ENCODE measurements at regions of chr12 and their contacts with region 1.

Region 1: GRCh38 chr12:13211859-13212664 is 15.5 kb downstream of the EMP1 start:
- DNase-seq: peak; percentile 74 to 91 (median 84)
- H3K4me3 ChIP-seq: no peak overlapping the region
- H3K27ac ChIP-seq: no peak overlapping the region
- H3K4me1 ChIP-seq: peaks cover 0 to 47% (median 39%) of the 10 kb centered on the region in 4 experiments
- H3K27me3 ChIP-seq: no peaks in the 10 kb centered on the region

Region 2: DNA sequence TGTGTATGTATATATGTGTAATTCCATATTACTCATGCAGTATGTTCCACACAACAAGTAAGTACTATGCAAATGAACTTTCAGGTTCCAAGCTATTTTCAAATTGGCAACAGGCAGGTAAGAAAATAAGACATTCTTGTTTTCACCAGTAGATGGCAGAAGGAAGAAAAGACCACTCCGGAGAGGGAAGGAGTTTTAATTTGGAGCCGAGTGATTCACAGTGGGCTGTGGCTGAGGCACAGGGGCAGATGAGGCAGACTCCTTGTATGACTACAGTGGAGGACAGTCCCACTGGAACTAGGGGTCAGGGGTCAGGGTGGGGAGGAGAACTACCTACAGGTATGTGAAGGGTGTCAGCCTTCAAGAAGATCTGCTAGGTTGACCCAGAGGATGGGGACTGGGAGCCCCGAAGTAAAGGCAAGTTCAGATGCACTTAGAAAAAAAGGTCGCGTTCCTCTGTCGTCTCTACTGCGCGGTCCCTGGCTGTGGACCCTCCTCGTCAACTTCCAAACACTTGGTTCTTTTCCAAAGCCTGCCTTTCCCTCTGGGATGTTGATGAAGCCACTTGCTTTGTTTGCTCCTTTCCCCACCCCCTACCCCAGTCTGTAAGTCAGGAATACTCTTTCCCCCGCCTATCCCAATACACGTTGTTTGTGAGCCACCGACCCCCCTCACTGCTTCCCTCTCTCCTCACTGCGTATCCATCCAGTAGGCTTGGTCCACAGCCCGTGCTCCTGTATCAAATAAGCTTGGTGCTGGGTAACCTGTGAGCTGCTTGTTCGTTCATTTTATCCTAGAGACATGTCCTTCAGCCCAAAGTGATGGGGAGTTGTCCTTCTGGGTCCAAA is 374.8 kb before region 1 on chr12:
- CTCF ChIA-PET with region 1: interaction called, 36 read pairs
- POLR2A ChIA-PET with region 1: no interaction called
- DNase-seq: peak; percentile 56 to 78 (median 70)
- H3K4me3 ChIP-seq: no peak overlapping the region
- H3K27ac ChIP-seq: no peak overlapping the region
- H3K4me1 ChIP-seq: peaks cover 0 to 5% (median 1%) of the 10 kb centered on the region in 4 experiments
- H3K27me3 ChIP-seq: no peaks in the 10 kb centered on the region

Region 3: DNA sequence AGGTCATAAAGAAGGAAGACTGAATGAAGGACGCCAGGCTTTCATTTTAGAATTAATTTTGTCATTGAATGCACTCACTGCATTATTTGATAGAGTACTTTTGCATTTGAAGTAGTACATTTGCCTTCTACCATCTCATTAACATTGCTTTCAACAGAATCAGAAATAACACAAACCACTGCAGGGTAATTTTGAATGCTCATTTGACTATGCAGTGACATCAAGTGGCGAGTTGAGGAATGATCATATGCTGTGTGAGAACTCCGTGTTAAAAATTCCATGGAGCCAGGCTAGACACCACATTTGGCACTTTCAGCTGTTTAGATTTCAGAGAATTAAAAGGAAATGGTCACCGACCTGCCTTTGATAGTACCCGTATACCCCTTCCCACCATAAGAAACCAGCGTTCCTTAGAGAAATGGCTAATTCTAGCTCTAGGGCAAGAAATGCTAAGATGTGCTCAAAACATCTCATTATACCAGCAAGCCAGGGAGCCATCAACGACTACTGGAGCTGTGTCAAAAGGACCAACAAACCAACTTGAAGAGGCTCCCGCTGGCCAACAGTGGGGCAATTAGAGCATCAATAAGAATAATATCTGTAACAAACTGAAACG is 228.5 kb before region 1 on chr12:
- CTCF ChIA-PET with region 1: interaction called, 123 read pairs
- POLR2A ChIA-PET with region 1: no interaction called
- DNase-seq: peak; percentile 31 to 58 (median 57)
- H3K4me3 ChIP-seq: no peak overlapping the region
- H3K27ac ChIP-seq: no peak overlapping the region
- H3K4me1 ChIP-seq: no peaks in the 10 kb centered on the region
- H3K27me3 ChIP-seq: no peaks in the 10 kb centered on the region

Region 4: GRCh38 chr12:13066459-13066858 is 145.6 kb before region 1 on chr12:
- CTCF ChIA-PET with region 1: interaction called, 15 read pairs
- POLR2A ChIA-PET with region 1: no interaction called
- DNase-seq: no peak
- H3K4me3 ChIP-seq: no peak overlapping the region
- H3K27ac ChIP-seq: no peak overlapping the region
- H3K4me1 ChIP-seq: no peaks in the 10 kb centered on the region
- H3K27me3 ChIP-seq: no peaks in the 10 kb centered on the region

Region 5: DNA sequence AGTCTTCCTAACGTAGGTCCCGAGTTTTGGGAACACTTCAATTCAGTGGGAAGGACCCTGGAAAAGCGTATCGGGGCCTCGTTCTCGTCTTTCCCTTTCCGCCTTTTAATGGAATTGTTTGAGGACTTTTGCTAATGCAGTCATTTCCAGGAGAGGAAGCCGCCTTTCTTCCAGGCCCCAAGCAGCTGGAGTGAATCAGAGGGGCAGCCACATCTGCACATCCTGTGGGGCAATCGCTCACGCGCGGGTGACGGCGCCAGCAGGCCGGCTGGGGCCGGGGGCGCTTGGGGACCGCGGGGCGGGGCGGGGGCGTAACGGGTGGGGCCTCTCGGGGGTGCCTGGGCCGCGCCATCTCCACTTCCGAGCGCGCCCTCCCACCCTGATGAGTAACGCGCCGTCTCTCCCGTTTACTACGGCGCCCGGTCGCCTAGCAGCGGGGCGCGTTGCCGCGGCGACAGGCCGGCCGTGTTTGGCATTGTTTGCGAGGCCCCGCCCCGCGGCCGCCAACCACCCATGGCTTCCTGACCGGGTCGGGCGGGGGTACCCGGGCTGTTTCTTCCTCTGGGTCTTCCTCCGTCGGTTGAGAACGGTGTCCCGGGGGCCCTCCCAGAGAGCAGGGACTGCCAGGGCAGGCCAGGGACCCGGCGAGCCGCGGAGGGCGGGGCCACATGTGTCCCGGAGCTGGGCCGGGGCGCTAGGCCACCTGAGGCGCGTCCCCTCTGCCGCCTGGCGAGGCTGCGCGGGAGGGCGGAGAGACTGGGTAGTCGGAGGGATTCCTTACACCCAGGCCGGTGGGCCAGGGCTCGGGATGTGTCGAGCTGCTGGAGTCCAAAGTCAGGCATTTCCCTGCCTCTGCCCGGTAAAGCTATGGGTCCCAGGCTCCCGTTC is 110.9 kb before region 1 on chr12:
- CTCF ChIA-PET with region 1: interaction called, 47 read pairs
- POLR2A ChIA-PET with region 1: no interaction called
- DNase-seq: peak; percentile 96 to 99 (median 99)
- H3K4me3 ChIP-seq: peak overlapping the region in 6 of 7 experiments; percentile 41 to 72 (median 64)
- H3K27ac ChIP-seq: peak overlapping the region; percentile 97 to 99
- H3K4me1 ChIP-seq: peaks cover 31 to 74% (median 72%) of the 10 kb centered on the region in 4 experiments
- H3K27me3 ChIP-seq: no peaks in the 10 kb centered on the region

Region 6: GRCh38 chr12:13223179-13223859 is 11.3 kb after region 1 on chr12:
- CTCF ChIA-PET with region 1: interaction called, 13 read pairs
- POLR2A ChIA-PET with region 1: no interaction called
- DNase-seq: no peak
- H3K4me3 ChIP-seq: no peak overlapping the region
- H3K27ac ChIP-seq: no peak overlapping the region
- H3K4me1 ChIP-seq: no peaks in the 10 kb centered on the region
- H3K27me3 ChIP-seq: no peaks in the 10 kb centered on the region

Region 7: GRCh38 chr12:13275241-13276085 is 63.4 kb after region 1 on chr12:
- CTCF ChIA-PET with region 1: no interaction called
- POLR2A ChIA-PET with region 1: no interaction called
- DNase-seq: peak in 2 of 3 donors; percentile 29 to 48
- H3K4me3 ChIP-seq: no peak overlapping the region
- H3K27ac ChIP-seq: no peak overlapping the region
- H3K4me1 ChIP-seq: peaks cover 0 to 7% (median 2%) of the 10 kb centered on the region in 4 experiments
- H3K27me3 ChIP-seq: peaks cover 2 to 36% (median 23%) of the 10 kb centered on the region in 5 experiments